Activated CD8-positive, alpha-beta T cell treated with anti-CD3 and anti-CD28 coated beads, Interleukin-2, amount 10 ng/mL, durations not matched to agents 7 days and 5 days (primary cell): ENCODE measurements at regions of chr2 and their contacts with region 1.

Region 1: GRCh38 chr2:10079234-10079869 is 859 bp downstream of the CYS1 start:
- DNase-seq: peak; percentile 37
- ATAC-seq: peak; percentile 56
- H3K4me3 Mint-ChIP-seq: peak overlapping the region; percentile 73
- H3K27ac Mint-ChIP-seq: no peak overlapping the region
- H3K4me1 Mint-ChIP-seq: peaks cover 27% of the 10 kb centered on the region
- H3K27me3 Mint-ChIP-seq: peaks cover 63% of the 10 kb centered on the region

Region 2: GRCh38 chr2:10036095-10036884 is 43.1 kb before region 1 on chr2:
- CTCF ChIA-PET with region 1: no interaction called
- POLR2A ChIA-PET with region 1: no interaction called
- DNase-seq: no peak
- ATAC-seq: peak; percentile 54
- H3K4me3 Mint-ChIP-seq: no peak overlapping the region
- H3K27ac Mint-ChIP-seq: no peak overlapping the region
- H3K4me1 Mint-ChIP-seq: peaks cover 8% of the 10 kb centered on the region
- H3K27me3 Mint-ChIP-seq: peaks cover 20% of the 10 kb centered on the region

Region 3: GRCh38 chr2:10091182-10091888 is 12.0 kb after region 1 on chr2:
- CTCF ChIA-PET with region 1: interaction called, 109 read pairs
- POLR2A ChIA-PET with region 1: no interaction called
- DNase-seq: peak; percentile 39
- ATAC-seq: peak; percentile 64
- H3K4me3 Mint-ChIP-seq: peak overlapping the region; percentile 5
- H3K27ac Mint-ChIP-seq: no peak overlapping the region
- H3K4me1 Mint-ChIP-seq: peaks cover 13% of the 10 kb centered on the region
- H3K27me3 Mint-ChIP-seq: peaks cover 59% of the 10 kb centered on the region

Region 4: DNA sequence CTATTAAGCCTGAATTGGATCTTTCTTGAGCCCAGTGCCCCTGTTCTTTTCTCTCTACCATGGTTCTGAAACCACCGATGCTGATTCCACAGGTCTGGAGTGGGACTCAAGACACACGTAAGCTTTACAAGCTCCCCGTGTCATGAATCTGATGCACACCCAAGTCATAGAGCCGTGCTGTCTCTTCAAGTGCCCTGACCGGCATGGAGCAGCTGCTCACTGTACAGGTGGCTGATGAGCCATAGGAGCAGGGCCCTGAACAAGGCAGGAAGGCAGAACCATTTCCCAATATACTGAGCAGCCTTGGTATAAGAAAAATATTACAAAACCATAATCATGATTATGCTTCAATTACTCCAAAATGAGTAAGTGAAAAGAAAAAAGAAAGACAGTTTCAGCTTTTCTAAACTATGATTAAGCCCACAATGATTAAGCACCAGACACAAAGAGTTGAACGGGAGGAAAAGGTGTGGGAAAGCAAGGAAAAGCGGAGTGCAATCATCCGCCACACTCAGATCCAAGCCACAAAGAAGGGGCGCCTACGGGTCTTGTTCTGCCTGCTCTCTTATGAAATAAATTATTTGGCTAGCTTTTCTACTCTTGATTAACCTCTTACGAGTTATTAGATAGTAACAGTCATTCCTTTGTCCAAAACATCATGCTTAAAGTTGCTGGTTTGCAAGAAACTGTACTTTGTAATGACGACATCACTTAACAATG is 568.7 kb after region 1 on chr2:
- CTCF ChIA-PET with region 1: no interaction called
- POLR2A ChIA-PET with region 1: no interaction called
- DNase-seq: no peak
- ATAC-seq: no peak
- H3K4me3 Mint-ChIP-seq: no peak overlapping the region
- H3K27ac Mint-ChIP-seq: no peak overlapping the region
- H3K4me1 Mint-ChIP-seq: peaks cover 20% of the 10 kb centered on the region
- H3K27me3 Mint-ChIP-seq: no peaks in the 10 kb centered on the region